Panc1 (cell line): ENCODE measurements at regions of chr17 and their contacts with region 1.

Region 1: DNA sequence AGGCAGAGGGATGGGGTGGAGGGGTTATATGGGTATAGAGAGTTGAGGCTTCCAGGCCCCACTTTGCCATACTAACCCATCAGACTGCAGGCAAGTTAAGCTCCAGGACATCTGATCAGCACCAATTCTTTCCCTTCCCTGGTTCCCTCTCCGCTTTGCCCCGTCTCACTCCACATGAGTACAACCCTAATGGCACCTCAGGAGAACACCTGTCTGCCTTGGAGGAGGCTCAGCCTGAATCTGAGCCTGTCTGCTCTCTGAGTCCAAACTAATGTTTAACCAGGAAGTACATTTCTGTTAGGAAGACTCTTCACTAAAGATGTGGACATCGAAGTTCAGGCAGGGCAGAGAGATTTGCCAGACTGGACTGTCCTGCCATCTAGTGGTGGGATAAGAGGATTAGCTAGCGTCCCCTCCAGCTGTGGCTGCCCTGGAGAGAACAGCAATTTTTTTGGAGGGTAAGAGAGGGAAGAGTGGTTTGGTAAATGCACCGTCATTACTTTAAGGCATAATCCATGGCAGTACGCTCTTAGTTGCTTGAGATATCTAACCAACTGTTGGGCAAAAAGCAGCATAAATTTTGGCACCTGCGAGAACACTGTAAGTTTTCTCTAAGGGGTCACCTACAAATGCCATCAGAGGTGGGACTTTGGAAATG is 29.2 kb upstream of the LRRC75A start:
- DNase-seq: peak; percentile 63
- ATAC-seq: peak; percentile 97
- H3K4me3 ChIP-seq: no peak overlapping the region
- H3K27ac ChIP-seq: 0 out of 2 replicates have a peak overlapping the region, but pooled peaks have one; percentile 29
- H3K4me1 ChIP-seq: no peaks in the 10 kb centered on the region; the same call in 1 of the 2 replicates
- H3K27me3 ChIP-seq: no peaks in the 10 kb centered on the region
- CTCF ChIP-seq: peak; percentile 90

Region 2: GRCh38 chr17:16438557-16439302 is 82.5 kb before region 1 on chr17:
- CTCF ChIA-PET with region 1: no interaction called
- POLR2A ChIA-PET with region 1: interaction called, 10 read pairs
- in situ Hi-C with region 1: no loop called
- intact Hi-C with region 1: no loop called
- DNase-seq: peak; percentile 98
- ATAC-seq: peak; percentile 90
- H3K4me3 ChIP-seq: peak overlapping the region; percentile 98 to 99
- H3K27ac ChIP-seq: peak overlapping the region; percentile 97
- H3K4me1 ChIP-seq: peaks cover 31% of the 10 kb centered on the region
- H3K27me3 ChIP-seq: no peaks in the 10 kb centered on the region
- CTCF ChIP-seq: no peak

Region 3: GRCh38 chr17:16453493-16453851 is 67.7 kb before region 1 on chr17:
- CTCF ChIA-PET with region 1: interaction called, 36 read pairs
- POLR2A ChIA-PET with region 1: no interaction called
- in situ Hi-C with region 1: no loop called
- intact Hi-C with region 1: loop called (anchors 1 kb)
- DNase-seq: no peak
- ATAC-seq: no peak
- H3K4me3 ChIP-seq: no peak overlapping the region
- H3K27ac ChIP-seq: no peak overlapping the region
- H3K4me1 ChIP-seq: no peaks in the 10 kb centered on the region
- H3K27me3 ChIP-seq: no peaks in the 10 kb centered on the region
- CTCF ChIP-seq: no peak; the same call in 1 of the 2 replicates